Endothelial cell of umbilical vein (primary cell): ENCODE measurements at regions of chr5 and their contacts with region 1.

Region 1: GRCh38 chr5:148482691-148483462 is 99.1 kb downstream of the FBXO38 start:
- DNase-seq: peak; percentile 59
- H3K4me3 ChIP-seq: no peak overlapping the region
- H3K27ac ChIP-seq: no peak overlapping the region
- H3K4me1 ChIP-seq: no peaks in the 10 kb centered on the region
- H3K27me3 ChIP-seq: peaks cover 0 to 7% of the 10 kb centered on the region in 2 experiments
- CTCF ChIP-seq: peak; percentile 85 to 90
- POLR2A ChIP-seq: no peak

Region 2: DNA sequence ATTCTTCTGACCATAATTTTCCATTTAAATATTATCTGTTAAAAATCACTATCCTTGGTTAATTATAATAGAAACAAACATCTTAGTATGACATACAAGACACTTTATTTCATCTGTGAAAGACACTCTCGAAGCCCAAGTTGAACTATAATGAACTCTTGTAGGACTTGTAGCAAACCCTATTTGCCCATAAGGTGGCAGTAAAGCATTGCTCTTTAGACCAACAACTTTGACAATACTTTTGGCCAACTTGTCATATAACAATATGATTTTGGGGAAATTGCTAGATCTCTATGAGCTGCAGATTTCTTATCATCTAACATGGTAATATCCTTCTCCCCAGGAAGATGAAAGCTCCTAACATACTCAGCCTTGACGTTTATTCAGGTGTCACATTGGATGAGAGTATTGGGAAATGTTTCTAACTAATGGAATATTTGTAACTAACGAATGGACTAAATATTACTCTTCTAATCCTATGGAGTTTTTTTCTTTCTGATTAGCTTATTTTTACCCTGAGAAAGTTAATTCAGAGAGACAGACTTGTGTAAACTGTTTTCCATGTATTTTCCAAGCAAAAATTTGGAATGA is 303.5 kb before region 1 on chr5:
- CTCF ChIA-PET with region 1: interaction called, 7 read pairs
- POLR2A ChIA-PET with region 1: no interaction called
- dilution Hi-C with region 1: no loop called
- intact Hi-C with region 1: loop called (anchors 1 kb)
- DNase-seq: peak; percentile 78
- H3K4me3 ChIP-seq: no peak overlapping the region
- H3K27ac ChIP-seq: no peak overlapping the region
- H3K4me1 ChIP-seq: no peaks in the 10 kb centered on the region
- H3K27me3 ChIP-seq: no peaks in the 10 kb centered on the region
- CTCF ChIP-seq: peak; percentile 53 to 56
- POLR2A ChIP-seq: no peak

Region 3: GRCh38 chr5:148290271-148291195 is 192.3 kb before region 1 on chr5:
- CTCF ChIA-PET with region 1: interaction called, 7 read pairs
- POLR2A ChIA-PET with region 1: no interaction called
- dilution Hi-C with region 1: no loop called
- intact Hi-C with region 1: loop called (anchors 1 kb)
- DNase-seq: peak; percentile 36
- H3K4me3 ChIP-seq: no peak overlapping the region
- H3K27ac ChIP-seq: no peak overlapping the region
- H3K4me1 ChIP-seq: no peaks in the 10 kb centered on the region
- H3K27me3 ChIP-seq: no peaks in the 10 kb centered on the region
- CTCF ChIP-seq: peak; percentile 24 to 42
- POLR2A ChIP-seq: no peak

Region 4: GRCh38 chr5:148457183-148457620 is 25.7 kb before region 1 on chr5:
- CTCF ChIA-PET with region 1: interaction called, 12 read pairs
- POLR2A ChIA-PET with region 1: no interaction called
- dilution Hi-C with region 1: no loop called
- intact Hi-C with region 1: no loop called
- DNase-seq: peak; percentile 34
- H3K4me3 ChIP-seq: no peak overlapping the region
- H3K27ac ChIP-seq: no peak overlapping the region
- H3K4me1 ChIP-seq: no peaks in the 10 kb centered on the region
- H3K27me3 ChIP-seq: no peaks in the 10 kb centered on the region
- CTCF ChIP-seq: peak; percentile 21 to 39
- POLR2A ChIP-seq: no peak

Region 5: DNA sequence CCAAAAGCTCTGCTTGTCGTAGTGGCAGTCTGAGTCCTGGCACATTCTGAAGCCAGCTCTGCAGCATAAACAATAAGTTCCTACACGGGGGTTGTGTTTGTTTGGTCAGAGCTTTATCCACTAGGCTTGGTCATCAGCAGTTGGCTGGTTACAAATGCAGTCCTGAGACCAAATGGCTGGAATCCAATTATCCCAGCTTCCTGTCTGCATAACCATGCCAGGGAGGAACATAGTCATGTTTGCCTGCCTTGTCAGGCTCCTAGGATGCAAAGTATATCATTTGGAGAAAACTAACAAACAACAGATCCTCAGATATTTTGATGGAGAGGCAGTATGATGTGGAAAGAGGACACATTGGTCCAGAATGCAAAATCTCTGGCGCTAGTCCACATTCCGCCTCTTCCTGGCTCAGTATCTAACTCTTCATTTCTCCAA is 13.4 kb before region 1 on chr5:
- CTCF ChIA-PET with region 1: interaction called, 17 read pairs
- POLR2A ChIA-PET with region 1: no interaction called
- dilution Hi-C with region 1: no loop called
- intact Hi-C with region 1: loop called (anchors 1 kb)
- DNase-seq: peak; percentile 92
- H3K4me3 ChIP-seq: no peak overlapping the region
- H3K27ac ChIP-seq: peak overlapping the region; percentile 82
- H3K4me1 ChIP-seq: peaks cover 55% of the 10 kb centered on the region
- H3K27me3 ChIP-seq: no peaks in the 10 kb centered on the region
- CTCF ChIP-seq: no peak
- POLR2A ChIP-seq: no peak

Region 6: DNA sequence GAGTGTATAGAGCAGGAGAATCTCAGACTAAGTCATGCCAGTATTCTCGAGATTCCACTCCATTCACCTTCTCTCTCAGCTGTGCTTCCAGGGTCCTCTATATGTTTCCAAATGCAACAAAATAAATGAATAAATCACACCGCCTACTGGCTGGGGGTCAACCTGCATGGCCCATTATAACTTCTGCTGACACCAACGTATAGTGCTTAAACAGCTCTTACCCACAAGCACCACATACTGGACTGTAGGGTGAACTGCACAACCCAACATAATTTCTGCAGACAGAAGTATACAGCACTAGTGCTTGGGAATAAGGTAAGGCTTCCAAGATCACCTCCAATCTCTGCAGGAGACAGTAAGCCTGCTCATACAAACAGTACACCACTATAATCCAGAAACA is 204.6 kb after region 1 on chr5:
- CTCF ChIA-PET with region 1: interaction called, 11 read pairs
- POLR2A ChIA-PET with region 1: no interaction called
- dilution Hi-C with region 1: no loop called
- intact Hi-C with region 1: no loop called
- DNase-seq: peak; percentile 58
- H3K4me3 ChIP-seq: no peak overlapping the region
- H3K27ac ChIP-seq: no peak overlapping the region
- H3K4me1 ChIP-seq: no peaks in the 10 kb centered on the region
- H3K27me3 ChIP-seq: peaks cover 0 to 4% of the 10 kb centered on the region in 2 experiments
- CTCF ChIP-seq: peak; percentile 52 to 66
- POLR2A ChIP-seq: no peak